ENCODE measurements at regions of chr16 and their contacts with region 1.

Region 1: DNA sequence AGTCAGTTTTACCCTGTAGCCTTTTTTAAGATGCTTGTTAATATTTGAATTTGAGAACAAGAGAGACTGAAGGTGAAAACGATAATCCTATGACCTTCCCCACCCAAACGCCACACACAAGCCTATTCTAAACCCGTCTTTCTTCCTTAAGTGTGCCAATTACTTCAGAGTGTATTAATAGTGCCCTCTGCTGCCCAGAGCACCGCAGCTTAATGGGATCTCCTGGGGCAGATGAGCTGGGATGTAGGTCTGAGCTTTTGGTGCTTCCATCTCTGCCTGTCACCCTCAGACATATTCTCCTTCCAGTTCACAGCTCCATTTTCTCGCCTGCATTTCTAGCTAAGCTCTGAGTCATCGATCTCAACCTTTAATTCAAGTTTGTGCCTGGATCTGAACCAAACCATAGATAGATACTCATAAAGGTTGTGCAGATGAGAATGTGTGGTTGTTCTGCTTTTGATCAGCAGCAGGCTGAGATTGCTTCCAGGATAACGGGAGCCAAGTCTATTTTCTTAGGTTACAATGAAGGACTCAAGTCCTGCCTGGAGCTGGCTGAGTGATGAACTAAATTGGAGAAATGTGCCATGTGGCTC is 46.4 kb upstream of the CDH13 start:
- DNase-seq: peak; percentile 27
- H3K4me3 ChIP-seq: no peak overlapping the region
- H3K27ac ChIP-seq: no peak overlapping the region
- H3K4me1 ChIP-seq: no peaks in the 10 kb centered on the region
- H3K27me3 ChIP-seq: no peaks in the 10 kb centered on the region
- CTCF ChIP-seq: no peak

Region 2: GRCh38 chr16:82263521-82264143 is 316.8 kb before region 1 on chr16:
- intact Hi-C with region 1: loop called (anchors 5 kb)
- DNase-seq: peak; percentile 64
- H3K4me3 ChIP-seq: no peak overlapping the region
- H3K27ac ChIP-seq: no peak overlapping the region
- H3K4me1 ChIP-seq: no peaks in the 10 kb centered on the region
- H3K27me3 ChIP-seq: peaks cover 5% of the 10 kb centered on the region
- CTCF ChIP-seq: peak; percentile 89

Region 3: DNA sequence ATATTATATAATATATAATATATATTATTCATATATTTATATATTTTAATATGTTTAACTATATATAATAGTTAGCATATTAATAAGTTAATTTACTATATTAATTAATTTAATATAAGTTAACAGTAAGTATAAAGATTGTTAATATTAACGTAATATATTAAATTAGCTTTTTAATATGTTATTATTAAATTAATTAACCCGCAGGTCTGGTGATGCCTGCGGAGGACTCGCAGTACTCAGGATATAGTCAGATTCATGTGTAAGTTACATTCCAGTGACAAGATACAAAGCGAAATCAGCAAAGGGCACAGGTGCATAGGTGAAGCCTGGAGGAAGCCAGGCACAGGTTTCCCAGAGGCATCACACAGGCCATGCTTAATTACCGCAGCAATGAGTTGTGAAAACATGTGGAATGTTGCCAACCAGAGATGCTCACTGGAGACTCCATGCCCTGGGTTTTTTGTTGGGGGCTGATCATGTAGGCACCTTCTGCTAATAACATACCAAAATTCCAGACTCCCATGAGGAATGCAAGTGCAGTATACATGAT is 279.9 kb before region 1 on chr16:
- intact Hi-C with region 1: no loop called
- DNase-seq: no peak
- H3K4me3 ChIP-seq: no peak overlapping the region
- H3K27ac ChIP-seq: no peak overlapping the region
- H3K4me1 ChIP-seq: no peaks in the 10 kb centered on the region
- H3K27me3 ChIP-seq: no peaks in the 10 kb centered on the region
- CTCF ChIP-seq: no peak

Region 4: DNA sequence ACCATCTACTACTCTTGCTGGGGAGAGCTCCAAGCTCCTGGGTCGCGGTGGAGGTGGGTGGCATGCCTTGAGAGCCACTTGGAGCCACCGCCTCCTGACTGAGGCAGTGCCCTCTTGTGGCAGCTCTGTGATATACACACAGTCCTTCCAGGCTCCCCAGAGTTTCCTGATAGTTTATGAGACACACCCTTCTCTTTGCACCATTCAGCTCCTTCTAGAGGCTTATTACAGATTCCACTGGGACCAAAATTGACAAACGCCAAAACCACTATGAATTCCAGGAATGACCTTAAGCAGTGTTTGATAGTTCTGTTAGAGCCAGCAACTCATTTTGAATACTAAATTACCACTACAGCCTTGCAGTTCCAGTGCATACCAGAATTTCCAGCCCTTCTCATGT is 123.7 kb before region 1 on chr16:
- intact Hi-C with region 1: no loop called
- DNase-seq: peak; percentile 67
- H3K4me3 ChIP-seq: no peak overlapping the region
- H3K27ac ChIP-seq: no peak overlapping the region
- H3K4me1 ChIP-seq: no peaks in the 10 kb centered on the region
- H3K27me3 ChIP-seq: no peaks in the 10 kb centered on the region
- CTCF ChIP-seq: peak; percentile 66

Region 5: GRCh38 chr16:82703871-82704768 is 123.7 kb after region 1 on chr16:
- intact Hi-C with region 1: no loop called
- DNase-seq: no peak
- H3K4me3 ChIP-seq: no peak overlapping the region
- H3K27ac ChIP-seq: no peak overlapping the region
- H3K4me1 ChIP-seq: no peaks in the 10 kb centered on the region
- H3K27me3 ChIP-seq: no peaks in the 10 kb centered on the region
- CTCF ChIP-seq: no peak

Region 6: GRCh38 chr16:82924075-82924854 is 343.9 kb after region 1 on chr16:
- intact Hi-C with region 1: no loop called
- DNase-seq: no peak
- H3K4me3 ChIP-seq: no peak overlapping the region
- H3K27ac ChIP-seq: no peak overlapping the region
- H3K4me1 ChIP-seq: no peaks in the 10 kb centered on the region
- H3K27me3 ChIP-seq: no peaks in the 10 kb centered on the region
- CTCF ChIP-seq: no peak